Activated T-helper 1 cell treated with anti-CD3 and anti-CD28 coated beads, Interleukin-12 subunit alpha, Interleukin-12 subunit beta, Interleukin-2, Interleukin-4 antibody, amounts not matched to agents 30 ng/mL and 10 ng/mL and 1 ng/mL, durations not matched to agents 14 hours and 24 hours and 36 hours (primary cell): ENCODE measurements at regions of chr12 and their contacts with region 1.

Region 1: GRCh38 chr12:111942557-111942956 is 70.4 kb downstream of the TMEM116 start:
- DNase-seq: no peak
- H3K4me3 Mint-ChIP-seq: no peak overlapping the region
- H3K27ac Mint-ChIP-seq: peak overlapping the region; percentile 27
- H3K4me1 Mint-ChIP-seq: peaks cover 23% of the 10 kb centered on the region
- H3K27me3 Mint-ChIP-seq: no peaks in the 10 kb centered on the region

Region 2: DNA sequence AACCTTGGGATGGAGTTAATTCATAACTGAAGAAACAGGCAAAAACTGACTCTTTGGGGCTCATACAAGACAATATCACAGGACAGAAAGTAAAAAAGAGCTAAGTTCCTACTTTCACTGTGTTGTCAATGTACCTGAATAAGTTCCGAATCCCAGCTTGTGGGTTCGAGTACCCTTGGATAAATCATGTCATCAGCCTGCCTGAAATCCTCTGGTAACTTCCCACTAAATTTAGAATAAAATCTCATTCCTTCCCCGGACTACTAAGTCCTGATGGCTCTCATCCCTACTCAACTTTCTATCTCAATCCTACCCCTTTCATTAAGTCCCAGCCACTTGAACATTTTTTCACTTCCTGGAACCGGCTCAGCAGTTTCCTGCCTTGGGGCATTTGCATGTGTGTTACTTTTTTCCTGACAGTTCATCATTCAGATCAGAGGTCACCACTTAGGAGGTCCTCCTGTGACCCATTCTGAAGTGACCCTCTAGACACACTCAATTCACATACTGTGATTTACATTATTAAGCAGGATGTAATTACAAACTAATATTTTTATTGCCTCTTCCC is 83.3 kb after region 1 on chr12:
- intact Hi-C with region 1: loop called (anchors 5 kb)
- DNase-seq: no peak
- H3K4me3 Mint-ChIP-seq: peak overlapping the region; percentile 1
- H3K27ac Mint-ChIP-seq: peak overlapping the region; percentile 64
- H3K4me1 Mint-ChIP-seq: peaks cover 31% of the 10 kb centered on the region
- H3K27me3 Mint-ChIP-seq: no peaks in the 10 kb centered on the region

Region 3: GRCh38 chr12:112125250-112125999 is 182.9 kb after region 1 on chr12 and contains the start of gene TRAFD1:
- intact Hi-C with region 1: loop called (anchors 1 kb)
- DNase-seq: peak; percentile 98
- H3K4me3 Mint-ChIP-seq: peak within 1 kb of the TSS; percentile 82
- H3K27ac Mint-ChIP-seq: peak within 1 kb of the TSS; percentile 84
- H3K4me1 Mint-ChIP-seq: peaks cover 41% of the 10 kb centered on the region
- H3K27me3 Mint-ChIP-seq: peaks cover 10% of the 10 kb centered on the region
- total RNA-seq, gene TRAFD1: 46.5 and 46.7 TPM in 2 replicates

Region 4: DNA sequence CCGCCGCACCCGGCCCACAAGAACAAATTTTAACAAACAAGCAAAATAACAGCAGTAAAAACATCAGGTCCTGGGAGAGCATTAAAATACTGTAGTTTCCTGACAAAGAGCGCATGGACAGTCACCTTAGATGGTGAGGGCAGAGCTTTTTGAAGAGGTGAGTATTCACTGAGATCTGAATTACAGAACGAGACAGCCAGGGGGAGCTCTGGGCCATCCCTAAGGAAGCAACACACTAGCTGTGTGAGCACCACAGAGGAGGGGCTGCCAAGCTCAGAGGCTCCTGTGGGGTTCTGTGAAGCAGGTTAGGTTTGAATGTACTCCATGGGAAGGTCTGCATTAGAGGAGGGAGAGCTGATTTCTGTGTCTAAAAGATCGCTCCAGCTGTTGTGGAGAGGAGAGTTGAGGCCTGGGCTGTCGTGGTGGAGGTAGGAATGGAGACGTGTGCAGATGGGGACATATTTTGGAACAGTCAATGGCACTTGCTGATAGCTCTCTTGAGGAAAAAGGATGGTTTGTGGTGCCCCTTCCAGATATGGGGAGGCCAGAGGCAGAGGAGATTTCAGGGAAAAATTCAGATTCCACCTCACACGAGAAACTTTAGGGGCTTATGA is 255.7 kb after region 1 on chr12:
- intact Hi-C with region 1: loop called (anchors 10 kb)
- DNase-seq: peak; percentile 31
- H3K4me3 Mint-ChIP-seq: no peak overlapping the region
- H3K27ac Mint-ChIP-seq: no peak overlapping the region
- H3K4me1 Mint-ChIP-seq: no peaks in the 10 kb centered on the region
- H3K27me3 Mint-ChIP-seq: no peaks in the 10 kb centered on the region

Region 5: DNA sequence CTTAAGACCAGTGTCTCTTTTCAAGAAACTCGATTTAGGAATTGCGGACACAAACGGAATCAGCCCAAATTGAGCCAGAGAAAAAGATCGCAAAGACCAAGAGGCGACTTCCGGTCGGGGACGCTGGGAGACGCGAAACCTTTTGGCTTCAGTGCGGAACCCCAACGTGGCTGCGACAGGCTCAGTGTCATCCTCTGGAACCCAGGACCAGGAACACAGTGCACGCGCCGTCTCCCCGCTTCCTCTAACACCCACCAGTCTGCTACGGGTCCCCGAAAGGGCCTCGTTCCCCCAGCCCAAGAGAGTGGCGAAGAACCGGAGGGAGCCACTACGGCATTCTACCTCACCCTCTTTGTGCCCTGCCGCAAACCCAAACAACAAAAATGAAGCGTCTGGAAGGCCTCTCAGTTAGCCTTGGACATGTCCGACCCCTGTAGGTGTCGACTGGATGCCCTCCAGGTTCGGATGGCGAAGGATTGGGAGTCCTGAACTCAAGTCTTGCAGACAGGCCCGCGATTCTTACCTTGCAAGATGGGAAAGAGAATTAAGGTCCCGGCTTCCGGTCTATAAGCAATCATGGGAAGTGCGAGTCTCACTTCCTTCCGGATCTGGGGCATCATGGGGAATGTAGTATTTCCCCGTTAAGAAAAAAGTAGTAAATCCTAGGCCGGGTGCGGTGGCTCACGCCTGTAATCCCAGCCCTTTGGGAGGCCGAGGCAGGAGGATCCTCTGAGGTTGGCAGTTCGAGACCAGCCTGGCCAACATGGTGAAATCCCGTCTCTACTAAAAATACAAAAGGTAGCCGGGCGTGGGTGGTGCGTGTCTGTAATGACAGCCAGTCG is 466.7 kb after region 1 on chr12 and contains the start of gene RPL6:
- intact Hi-C with region 1: loop called (anchors 2 kb)
- DNase-seq: peak; percentile 75
- H3K4me3 Mint-ChIP-seq: peak within 1 kb of the TSS; percentile 100
- H3K27ac Mint-ChIP-seq: peak within 1 kb of the TSS; percentile 100
- H3K4me1 Mint-ChIP-seq: peaks cover 33% of the 10 kb centered on the region
- H3K27me3 Mint-ChIP-seq: no peaks in the 10 kb centered on the region
- total RNA-seq, gene RPL6: 1,690 and 1,698 TPM in 2 replicates

Region 6: GRCh38 chr12:112916270-112916669 is 973.7 kb after region 1 on chr12:
- intact Hi-C with region 1: no loop called
- DNase-seq: no peak
- H3K4me3 Mint-ChIP-seq: no peak overlapping the region
- H3K27ac Mint-ChIP-seq: no peak overlapping the region
- H3K4me1 Mint-ChIP-seq: peaks cover 26% of the 10 kb centered on the region
- H3K27me3 Mint-ChIP-seq: no peaks in the 10 kb centered on the region